ENCODE measurements at regions of chr11 and their contacts with region 1.

Region 1: DNA sequence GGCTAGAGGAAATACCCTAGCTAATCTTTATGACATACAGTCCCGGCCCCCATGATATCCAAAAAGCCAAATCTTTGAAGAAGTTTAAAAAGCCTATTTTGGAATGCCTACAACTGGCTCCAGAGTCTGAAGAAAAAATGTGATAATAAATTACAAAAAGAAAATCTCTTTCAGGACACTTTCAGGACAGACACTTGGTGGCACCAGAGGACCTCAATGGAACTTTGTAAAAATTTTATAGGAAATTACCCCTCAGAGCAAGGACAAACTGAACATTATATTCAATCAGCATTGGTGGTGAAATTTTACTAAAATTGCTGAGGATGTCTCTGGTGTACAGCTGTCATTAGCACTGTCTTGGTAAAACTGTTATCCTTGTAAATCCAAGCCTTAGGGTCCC is 81.0 kb downstream of the CCDC73 start:
- DNase-seq: no peak
- H3K4me3 ChIP-seq: no peak overlapping the region
- H3K27ac ChIP-seq: no peak overlapping the region
- H3K4me1 ChIP-seq: no peaks in the 10 kb centered on the region
- H3K27me3 ChIP-seq: no peaks in the 10 kb centered on the region
- CTCF ChIP-seq: no peak
- EP300 ChIP-seq: no peak
- POLR2A ChIP-seq: no peak

Region 2: GRCh38 chr11:32772731-32773130 is 59.2 kb after region 1 on chr11:
- intact Hi-C with region 1: loop called in 1 of 4 experiments (anchors 5 kb)
- DNase-seq: no peak
- H3K4me3 ChIP-seq: no peak overlapping the region
- H3K27ac ChIP-seq: no peak overlapping the region
- H3K4me1 ChIP-seq: no peaks in the 10 kb centered on the region
- H3K27me3 ChIP-seq: no peaks in the 10 kb centered on the region
- CTCF ChIP-seq: no peak
- EP300 ChIP-seq: no peak
- POLR2A ChIP-seq: no peak

Region 3: DNA sequence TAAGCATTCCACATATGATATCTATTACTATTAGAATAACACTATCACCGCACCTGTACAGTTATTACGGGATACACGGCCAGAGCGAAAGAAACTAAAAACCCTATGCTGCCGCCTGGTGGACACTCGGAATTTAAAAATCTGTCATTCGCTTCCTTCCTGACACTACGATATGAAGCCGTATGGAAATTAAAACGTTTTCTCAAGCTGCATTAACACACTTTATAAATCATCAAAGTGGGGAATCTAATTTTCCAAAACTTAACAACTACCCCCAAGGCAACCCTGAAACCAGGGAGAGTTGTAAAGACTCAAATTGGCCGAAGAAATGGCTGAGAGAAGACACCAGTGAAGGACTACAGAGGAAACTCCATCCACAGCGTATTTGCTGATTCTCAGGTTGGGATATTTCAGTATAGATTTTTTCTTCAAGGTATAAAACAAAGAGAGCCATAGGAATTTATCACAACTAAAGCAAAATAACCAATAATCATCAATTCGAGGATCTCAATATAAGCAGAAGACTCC is 79.5 kb after region 1 on chr11:
- intact Hi-C with region 1: loop called in 1 of 4 experiments (anchors 5 kb)
- DNase-seq: peak; percentile 18 to 66 (median 57)
- H3K4me3 ChIP-seq: no peak overlapping the region
- H3K27ac ChIP-seq: no peak overlapping the region
- H3K4me1 ChIP-seq: no peaks in the 10 kb centered on the region
- H3K27me3 ChIP-seq: no peaks in the 10 kb centered on the region
- CTCF ChIP-seq: peak; percentile 24 to 65 (median 58)
- EP300 ChIP-seq: no peak
- POLR2A ChIP-seq: no peak